Aorta (tissue), 5 donors: ENCODE measurements at regions of chr10 and their contacts with region 1.

Region 1: GRCh38 chr10:24428410-24428782 is 219.5 kb downstream of the KIAA1217 start:
- DNase-seq: no peak
- ATAC-seq: no peak
- H3K4me3 ChIP-seq: no peak overlapping the region
- H3K27ac ChIP-seq: peak overlapping the region in 1 of 2 donors; percentile 61
- H3K4me1 ChIP-seq: no peaks in the 10 kb centered on the region
- H3K27me3 ChIP-seq: no peaks in the 10 kb centered on the region

Region 2: DNA sequence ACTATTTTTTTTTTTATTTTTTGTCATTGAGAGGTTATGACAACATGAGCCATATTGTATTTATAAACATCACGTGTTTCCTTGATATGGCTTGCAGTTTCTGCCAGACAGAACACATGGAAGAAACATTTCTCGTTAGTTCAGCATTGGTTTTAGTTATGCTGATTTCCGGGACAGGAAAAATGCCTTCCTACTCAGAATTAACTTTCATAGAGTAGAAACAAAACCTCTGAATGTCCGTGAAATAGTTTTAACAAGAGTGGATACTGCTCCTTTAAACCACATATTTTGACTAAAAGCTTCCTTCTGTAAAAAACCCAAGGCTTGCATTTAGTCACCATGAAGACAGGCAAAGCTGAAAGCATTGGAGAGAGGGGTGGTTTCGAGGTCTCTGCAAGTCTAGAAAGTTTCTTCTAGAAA is 20.9 kb after region 1 on chr10:
- intact Hi-C with region 1: no loop called
- DNase-seq: no peak
- ATAC-seq: peak; percentile 52
- H3K4me3 ChIP-seq: peak overlapping the region in 1 of 2 donors; percentile 72
- H3K27ac ChIP-seq: no peak overlapping the region
- H3K4me1 ChIP-seq: peaks cover 0 to 1% of the 10 kb centered on the region in 2 donors
- H3K27me3 ChIP-seq: no peaks in the 10 kb centered on the region

Region 3: DNA sequence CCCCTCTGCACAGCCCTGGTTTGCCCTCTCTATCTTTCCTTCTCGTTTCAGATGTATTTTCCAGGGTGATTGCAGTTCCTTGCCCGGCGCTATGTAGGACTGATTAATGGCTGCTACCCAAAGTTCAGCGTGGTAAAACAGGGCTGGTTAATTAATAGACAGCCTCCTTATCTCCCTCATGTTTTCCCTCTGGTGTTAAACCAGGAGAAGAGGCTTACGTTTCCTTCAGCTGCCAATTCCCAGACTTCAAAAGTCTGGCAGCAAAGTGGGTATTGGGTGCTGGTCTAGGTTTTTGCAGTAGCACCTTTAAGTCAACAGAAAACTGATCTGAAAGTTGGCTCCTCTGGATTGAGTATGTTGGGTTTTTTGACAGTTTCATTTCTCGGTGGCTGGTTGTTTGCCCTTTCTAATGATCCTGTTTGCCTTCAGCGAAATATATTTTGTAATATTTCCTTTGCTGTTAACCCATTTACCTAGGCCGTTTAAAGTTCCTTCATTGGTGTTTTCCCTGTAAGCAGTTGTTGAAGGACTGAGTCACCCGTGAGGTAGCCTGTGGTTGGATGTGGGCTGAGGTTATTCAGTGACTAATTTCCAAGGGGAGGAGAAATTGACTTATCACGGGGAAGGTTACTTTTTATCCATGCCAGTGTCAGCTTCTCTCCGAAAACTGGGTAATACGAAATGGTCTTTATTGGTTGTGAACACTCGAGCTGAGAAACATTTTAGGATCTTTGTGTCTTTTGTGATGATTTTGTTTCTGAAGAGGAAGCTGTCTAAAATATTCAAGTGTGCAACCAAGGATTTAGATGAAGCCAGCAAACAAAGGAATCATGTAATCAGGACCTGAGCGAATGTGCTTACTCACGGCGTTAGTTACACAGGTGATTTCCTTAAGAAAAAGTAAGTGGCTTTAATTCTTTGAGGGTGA is 37.8 kb after region 1 on chr10:
- intact Hi-C with region 1: loop called in 1 of 2 experiments (anchors 5 kb)
- DNase-seq: no peak
- ATAC-seq: peak; percentile 40
- H3K4me3 ChIP-seq: no peak overlapping the region
- H3K27ac ChIP-seq: peak overlapping the region in 1 of 2 donors; percentile 11
- H3K4me1 ChIP-seq: peaks cover 3 to 4% of the 10 kb centered on the region in 2 donors
- H3K27me3 ChIP-seq: no peaks in the 10 kb centered on the region

Region 4: GRCh38 chr10:24533981-24534380 is 105.6 kb after region 1 on chr10:
- intact Hi-C with region 1: no loop called
- DNase-seq: no peak
- ATAC-seq: no peak
- H3K4me3 ChIP-seq: no peak overlapping the region
- H3K27ac ChIP-seq: no peak overlapping the region
- H3K4me1 ChIP-seq: no peaks in the 10 kb centered on the region
- H3K27me3 ChIP-seq: no peaks in the 10 kb centered on the region